Endothelial cell of umbilical vein (primary cell): ENCODE measurements at regions of chrX and their contacts with region 1.

Region 1: DNA sequence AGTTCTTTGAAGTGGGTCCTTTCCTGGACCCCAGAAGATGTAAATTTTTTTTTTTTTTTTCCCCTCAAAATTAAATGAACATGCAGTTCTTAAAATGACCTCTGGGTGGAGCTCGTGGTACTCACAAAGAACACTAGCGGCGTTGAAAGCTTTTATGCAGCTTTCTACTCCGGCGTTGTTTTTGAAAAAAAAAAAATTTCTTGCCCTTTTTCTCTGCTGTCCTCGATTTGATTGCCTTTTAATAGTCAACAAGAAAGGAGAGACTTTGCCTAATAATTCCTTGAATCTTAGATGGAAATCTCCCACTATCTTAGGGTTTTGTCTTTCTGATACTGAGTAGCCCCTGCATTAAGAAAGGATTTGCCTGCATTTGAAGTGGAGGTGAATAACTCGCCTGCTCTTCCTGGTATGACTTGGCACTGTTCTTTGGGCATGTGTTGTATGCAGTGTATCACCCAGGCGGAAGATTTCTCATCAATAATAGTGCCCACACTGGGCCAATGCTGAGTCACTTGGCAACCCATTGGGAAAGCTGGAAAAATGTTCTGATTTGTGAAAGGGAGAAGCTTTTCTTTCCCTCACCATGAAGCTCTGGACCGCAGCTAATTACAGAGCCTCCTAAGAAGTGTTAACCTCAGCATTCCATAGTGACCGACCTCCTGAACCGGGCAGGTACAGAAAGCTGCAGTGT is 104.0 kb downstream of the PHEX start:
- DNase-seq: peak; percentile 75
- H3K4me3 ChIP-seq: no peak overlapping the region
- H3K27ac ChIP-seq: peak overlapping the region; percentile 61
- H3K4me1 ChIP-seq: peaks cover 18% of the 10 kb centered on the region
- H3K27me3 ChIP-seq: no peaks in the 10 kb centered on the region
- CTCF ChIP-seq: peak; percentile 27 to 32
- POLR2A ChIP-seq: no peak

Region 2: GRCh38 chrX:21698272-21698671 is 437.9 kb before region 1 on chrX:
- CTCF ChIA-PET with region 1: no interaction called
- POLR2A ChIA-PET with region 1: no interaction called
- dilution Hi-C with region 1: no loop called
- intact Hi-C with region 1: no loop called
- DNase-seq: no peak
- H3K4me3 ChIP-seq: no peak overlapping the region
- H3K27ac ChIP-seq: no peak overlapping the region
- H3K4me1 ChIP-seq: no peaks in the 10 kb centered on the region
- H3K27me3 ChIP-seq: no peaks in the 10 kb centered on the region
- CTCF ChIP-seq: no peak
- POLR2A ChIP-seq: no peak

Region 3: GRCh38 chrX:21839334-21840192 is 296.6 kb before region 1 on chrX and contains the start of gene MBTPS2:
- CTCF ChIA-PET with region 1: no interaction called
- POLR2A ChIA-PET with region 1: no interaction called
- dilution Hi-C with region 1: no loop called
- intact Hi-C with region 1: loop called (anchors 10 kb)
- DNase-seq: peak; percentile 90
- H3K4me3 ChIP-seq: peak within 1 kb of the TSS; percentile 44 to 81 (median 62)
- H3K27ac ChIP-seq: peak within 1 kb of the TSS; percentile 86
- H3K4me1 ChIP-seq: no peaks in the 10 kb centered on the region
- H3K27me3 ChIP-seq: no peaks in the 10 kb centered on the region
- CTCF ChIP-seq: peak in 1 of 2 donors; percentile 15
- POLR2A ChIP-seq: peak; percentile 80
- total RNA-seq, gene MBTPS2: 14.5 and 16.4 TPM in 2 replicates

Region 4: GRCh38 chrX:22081475-22082092 is 54.6 kb before region 1 on chrX:
- CTCF ChIA-PET with region 1: interaction called, 36 read pairs
- POLR2A ChIA-PET with region 1: no interaction called
- dilution Hi-C with region 1: no loop called
- intact Hi-C with region 1: loop called (anchors 1 kb)
- DNase-seq: peak; percentile 46
- H3K4me3 ChIP-seq: no peak overlapping the region
- H3K27ac ChIP-seq: no peak overlapping the region
- H3K4me1 ChIP-seq: peaks cover 2% of the 10 kb centered on the region
- H3K27me3 ChIP-seq: no peaks in the 10 kb centered on the region
- CTCF ChIP-seq: peak; percentile 56 to 67
- POLR2A ChIP-seq: no peak

Region 5: GRCh38 chrX:22155126-22155525 is 19.0 kb after region 1 on chrX:
- CTCF ChIA-PET with region 1: no interaction called
- POLR2A ChIA-PET with region 1: no interaction called
- dilution Hi-C with region 1: no loop called
- intact Hi-C with region 1: no loop called
- DNase-seq: no peak
- H3K4me3 ChIP-seq: no peak overlapping the region
- H3K27ac ChIP-seq: no peak overlapping the region
- H3K4me1 ChIP-seq: no peaks in the 10 kb centered on the region
- H3K27me3 ChIP-seq: no peaks in the 10 kb centered on the region
- CTCF ChIP-seq: no peak
- POLR2A ChIP-seq: no peak

Region 6: GRCh38 chrX:22185228-22185627 is 49.1 kb after region 1 on chrX:
- CTCF ChIA-PET with region 1: no interaction called
- POLR2A ChIA-PET with region 1: interaction called, 4 read pairs
- dilution Hi-C with region 1: no loop called
- intact Hi-C with region 1: loop called (anchors 2 kb)
- DNase-seq: no peak
- H3K4me3 ChIP-seq: no peak overlapping the region
- H3K27ac ChIP-seq: no peak overlapping the region
- H3K4me1 ChIP-seq: no peaks in the 10 kb centered on the region
- H3K27me3 ChIP-seq: no peaks in the 10 kb centered on the region
- CTCF ChIP-seq: no peak
- POLR2A ChIP-seq: no peak

Region 7: GRCh38 chrX:22323541-22323940 is 187.4 kb after region 1 on chrX:
- CTCF ChIA-PET with region 1: no interaction called
- POLR2A ChIA-PET with region 1: no interaction called
- dilution Hi-C with region 1: no loop called
- intact Hi-C with region 1: loop called (anchors 5 kb)
- DNase-seq: peak; percentile 58
- H3K4me3 ChIP-seq: no peak overlapping the region
- H3K27ac ChIP-seq: peak overlapping the region; percentile 74
- H3K4me1 ChIP-seq: peaks cover 19% of the 10 kb centered on the region
- H3K27me3 ChIP-seq: no peaks in the 10 kb centered on the region
- CTCF ChIP-seq: no peak
- POLR2A ChIP-seq: no peak

Region 8: GRCh38 chrX:22889819-22890218 is 753.7 kb after region 1 on chrX:
- CTCF ChIA-PET with region 1: interaction called, 3 read pairs
- POLR2A ChIA-PET with region 1: no interaction called
- dilution Hi-C with region 1: no loop called
- intact Hi-C with region 1: loop called (anchors 5 kb)
- DNase-seq: peak; percentile 50
- H3K4me3 ChIP-seq: peak overlapping the region in 1 of 3 experiments; percentile 11
- H3K27ac ChIP-seq: peak overlapping the region; percentile 15
- H3K4me1 ChIP-seq: peaks cover 13% of the 10 kb centered on the region
- H3K27me3 ChIP-seq: no peaks in the 10 kb centered on the region
- CTCF ChIP-seq: no peak
- POLR2A ChIP-seq: no peak

Region 9: GRCh38 chrX:23554304-23554703 is 1418.2 kb after region 1 on chrX:
- CTCF ChIA-PET with region 1: interaction called, 13 read pairs
- POLR2A ChIA-PET with region 1: no interaction called
- dilution Hi-C with region 1: no loop called
- intact Hi-C with region 1: no loop called
- DNase-seq: peak; percentile 25
- H3K4me3 ChIP-seq: no peak overlapping the region
- H3K27ac ChIP-seq: no peak overlapping the region
- H3K4me1 ChIP-seq: no peaks in the 10 kb centered on the region
- H3K27me3 ChIP-seq: no peaks in the 10 kb centered on the region
- CTCF ChIP-seq: peak in 1 of 2 donors; percentile 34
- POLR2A ChIP-seq: no peak